Activated naive CD4-positive, alpha-beta T cell treated with anti-CD3 and anti-CD28 coated beads for 36 hours (primary cell): ENCODE measurements at regions of chr6 and their contacts with region 1.

Region 1: GRCh38 chr6:3977875-3978711 is 100.8 kb downstream of the FAM217A start:
- DNase-seq: peak; percentile 64
- H3K4me3 Mint-ChIP-seq: no peak overlapping the region
- H3K27ac Mint-ChIP-seq: no peak overlapping the region
- H3K4me1 Mint-ChIP-seq: peaks cover 6% of the 10 kb centered on the region
- H3K27me3 Mint-ChIP-seq: no peaks in the 10 kb centered on the region

Region 2: DNA sequence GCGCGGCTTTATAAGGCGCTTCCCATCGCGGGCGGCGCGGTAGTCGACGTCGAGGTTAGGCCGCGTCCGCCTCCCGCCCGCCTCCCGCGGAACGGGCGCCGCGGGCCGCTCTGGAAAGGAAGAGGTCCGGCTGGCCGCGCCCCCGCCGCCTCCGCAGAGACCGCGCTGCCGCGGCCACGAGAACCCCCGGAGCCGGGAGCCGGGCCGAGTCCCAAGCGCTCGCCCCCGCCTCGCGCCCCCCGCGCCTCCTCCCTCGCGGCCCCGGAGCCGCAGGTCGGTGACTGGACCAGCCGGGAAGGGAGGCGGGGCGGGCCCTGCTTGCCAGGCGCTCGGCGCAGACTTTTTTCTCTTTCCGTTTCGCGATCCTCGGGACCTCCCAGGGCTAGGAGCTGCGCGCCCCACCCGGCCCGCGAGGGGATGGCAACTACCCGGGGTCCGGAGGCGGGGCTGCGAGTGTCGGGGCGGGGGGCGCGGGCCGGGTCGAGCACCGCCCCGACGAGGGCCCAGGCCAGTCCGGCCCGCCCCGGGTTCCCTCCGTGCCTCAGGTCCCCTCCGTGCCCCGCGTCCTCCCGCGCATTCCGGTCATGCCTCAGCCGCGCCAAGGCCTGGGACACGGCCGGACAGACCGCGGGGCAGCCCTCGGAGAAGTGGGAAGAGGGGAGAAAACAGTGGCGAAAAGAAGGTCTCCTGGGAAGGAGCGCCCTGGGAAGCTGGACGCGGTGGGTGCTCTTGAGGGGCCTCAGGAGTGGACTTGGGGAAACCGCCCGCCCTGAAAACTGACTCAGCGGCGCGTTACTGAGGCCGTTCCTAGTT is 226.2 kb before region 1 on chr6:
- CTCF ChIA-PET with region 1: interaction called, 18 read pairs
- intact Hi-C with region 1: loop called (anchors 1 kb)
- DNase-seq: peak; percentile 76
- H3K4me3 Mint-ChIP-seq: peak overlapping the region; percentile 43
- H3K27ac Mint-ChIP-seq: no peak overlapping the region
- H3K4me1 Mint-ChIP-seq: no peaks in the 10 kb centered on the region
- H3K27me3 Mint-ChIP-seq: peaks cover 33% of the 10 kb centered on the region

Region 3: GRCh38 chr6:3929281-3929798 is 48.8 kb before region 1 on chr6:
- CTCF ChIA-PET with region 1: interaction called, 12 read pairs
- intact Hi-C with region 1: loop called (anchors 5 kb)
- DNase-seq: no peak
- H3K4me3 Mint-ChIP-seq: no peak overlapping the region
- H3K27ac Mint-ChIP-seq: no peak overlapping the region
- H3K4me1 Mint-ChIP-seq: no peaks in the 10 kb centered on the region
- H3K27me3 Mint-ChIP-seq: no peaks in the 10 kb centered on the region

Region 4: DNA sequence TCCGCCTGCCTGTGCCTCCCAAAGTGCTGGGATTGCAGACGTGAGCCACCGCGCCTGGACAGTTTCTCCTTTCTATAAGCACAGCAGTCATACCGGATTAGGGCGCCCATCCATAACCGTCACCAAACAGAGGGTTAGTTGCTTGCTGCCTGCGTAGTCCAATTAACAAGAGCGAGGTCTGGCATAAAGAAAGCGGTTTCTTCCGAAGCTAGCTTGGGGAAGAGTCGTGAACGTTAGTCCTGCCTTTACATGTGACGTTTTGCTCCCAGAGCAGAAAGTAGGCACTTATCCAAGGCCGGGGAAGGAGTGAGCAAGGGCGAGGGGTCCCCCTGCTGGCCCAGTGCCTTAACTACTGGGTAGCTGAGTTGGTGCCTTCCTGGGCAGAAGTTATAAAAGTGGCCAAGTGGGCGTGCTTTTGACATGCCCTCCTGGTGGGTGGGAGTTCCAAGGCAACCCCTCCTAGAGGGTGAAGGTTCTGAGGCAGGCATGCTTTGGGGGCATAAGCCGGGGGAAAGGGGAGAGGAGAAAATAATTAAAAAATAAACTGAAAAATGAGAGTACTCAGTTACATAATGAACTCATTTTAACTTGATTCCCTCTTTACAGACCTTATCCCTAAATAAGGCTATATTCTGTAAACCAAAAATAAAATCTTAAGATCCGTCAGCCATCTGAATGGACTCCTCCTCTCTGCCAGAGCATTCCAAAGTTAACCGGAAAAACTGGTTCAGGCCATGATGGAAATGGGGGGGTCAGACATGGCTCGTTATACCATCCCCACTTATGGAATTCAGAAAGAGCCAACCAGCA is 12.8 kb after region 1 on chr6:
- CTCF ChIA-PET with region 1: interaction called, 25 read pairs
- intact Hi-C with region 1: no loop called
- DNase-seq: peak; percentile 85
- H3K4me3 Mint-ChIP-seq: peak overlapping the region; percentile 3
- H3K27ac Mint-ChIP-seq: no peak overlapping the region
- H3K4me1 Mint-ChIP-seq: peaks cover 6% of the 10 kb centered on the region
- H3K27me3 Mint-ChIP-seq: no peaks in the 10 kb centered on the region

Region 5: DNA sequence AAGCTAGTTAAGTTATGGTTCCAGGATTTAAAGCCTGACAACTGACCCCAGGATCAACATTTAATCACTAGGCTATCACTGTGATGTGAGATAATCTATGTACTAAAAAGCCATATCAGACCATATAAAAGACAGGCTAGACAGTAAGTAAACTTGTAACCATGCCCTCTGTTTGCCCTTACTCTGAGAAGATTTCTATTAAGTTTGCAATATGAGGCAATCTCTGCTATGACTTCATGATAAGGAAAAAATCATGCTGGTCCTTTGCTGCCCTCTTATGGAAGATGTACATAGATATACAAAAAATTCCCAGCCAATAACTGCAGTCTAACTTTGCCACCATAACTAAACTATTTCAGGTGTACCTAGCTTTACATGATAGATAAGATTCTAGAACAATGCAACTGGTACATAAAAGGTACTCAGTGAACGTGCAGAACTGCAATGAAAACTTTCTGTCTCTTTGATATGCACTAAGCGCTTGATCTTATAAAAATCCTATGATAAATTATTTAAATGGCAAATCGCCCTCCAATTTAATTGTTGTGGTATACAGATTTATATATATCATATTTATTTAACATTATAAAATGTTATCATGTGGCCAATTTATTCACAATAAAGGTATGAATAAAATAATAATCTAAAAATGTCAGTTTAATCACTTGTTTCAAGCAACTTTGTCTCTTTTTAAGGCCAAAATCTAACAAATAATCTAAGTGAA is 30.4 kb after region 1 on chr6:
- CTCF ChIA-PET with region 1: interaction called, 9 read pairs
- intact Hi-C with region 1: loop called (anchors 1 kb)
- DNase-seq: peak; percentile 18
- H3K4me3 Mint-ChIP-seq: no peak overlapping the region
- H3K27ac Mint-ChIP-seq: no peak overlapping the region
- H3K4me1 Mint-ChIP-seq: peaks cover 48% of the 10 kb centered on the region
- H3K27me3 Mint-ChIP-seq: no peaks in the 10 kb centered on the region

Region 6: DNA sequence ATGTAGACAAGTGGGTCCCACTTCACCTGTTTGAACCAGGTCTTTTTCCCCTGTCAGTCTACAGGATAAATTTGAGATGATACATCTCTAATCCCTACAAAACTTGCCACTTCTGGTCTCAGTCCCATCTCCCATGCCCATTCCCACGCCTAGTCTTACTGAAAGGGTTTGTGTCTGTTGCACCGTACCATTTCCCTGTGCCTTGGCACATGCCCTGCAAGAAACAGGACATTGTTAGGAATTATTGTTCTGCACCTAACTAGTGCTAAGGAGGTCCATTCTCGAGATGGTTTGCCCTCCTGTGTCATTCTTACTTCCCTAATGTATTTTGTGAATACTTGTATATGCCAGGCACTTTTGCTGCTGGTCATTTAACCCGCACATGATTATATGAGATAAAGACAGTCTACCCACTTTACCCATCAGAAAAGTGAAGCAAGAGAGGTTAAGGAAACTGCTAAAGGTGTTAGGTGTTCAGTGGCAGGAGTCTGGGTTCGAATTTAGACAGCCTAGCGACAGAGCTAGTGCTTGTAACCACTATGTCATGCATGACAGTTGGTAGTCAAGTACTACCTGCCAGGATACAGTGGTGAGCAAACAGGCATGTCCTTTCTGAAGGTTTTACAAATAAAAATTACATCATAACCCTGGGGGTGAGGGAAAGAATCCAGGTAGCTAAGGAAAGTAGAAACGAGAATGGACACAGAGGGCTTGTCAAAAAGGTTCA is 88.1 kb after region 1 on chr6:
- CTCF ChIA-PET with region 1: no interaction called
- intact Hi-C with region 1: no loop called
- DNase-seq: no peak
- H3K4me3 Mint-ChIP-seq: no peak overlapping the region
- H3K27ac Mint-ChIP-seq: no peak overlapping the region
- H3K4me1 Mint-ChIP-seq: no peaks in the 10 kb centered on the region
- H3K27me3 Mint-ChIP-seq: no peaks in the 10 kb centered on the region